ENCODE measurements at regions of chr9 and their contacts with region 1.

Region 1: GRCh38 chr9:96818535-96818934 is 35.8 kb downstream of the ZNF782 start:
- DNase-seq: no peak
- ATAC-seq: no peak
- H3K4me3 ChIP-seq: no peak overlapping the region
- H3K27ac ChIP-seq: no peak overlapping the region
- H3K4me1 ChIP-seq: no peaks in the 10 kb centered on the region
- H3K27me3 ChIP-seq: no peaks in the 10 kb centered on the region
- CTCF ChIP-seq: no peak
- POLR2A ChIP-seq: no peak

Region 2: GRCh38 chr9:96758845-96759673 is 59.5 kb before region 1 on chr9:
- intact Hi-C with region 1: loop called in 2 of 10 experiments (anchors 10 kb)
- DNase-seq: no peak
- ATAC-seq: no peak
- H3K4me3 ChIP-seq: no peak overlapping the region
- H3K27ac ChIP-seq: no peak overlapping the region
- H3K4me1 ChIP-seq: no peaks in the 10 kb centered on the region
- H3K27me3 ChIP-seq: no peaks in the 10 kb centered on the region
- CTCF ChIP-seq: no peak
- POLR2A ChIP-seq: no peak

Region 3: GRCh38 chr9:97179572-97179971 is 361.0 kb after region 1 on chr9:
- intact Hi-C with region 1: no loop called
- DNase-seq: no peak
- ATAC-seq: no peak
- H3K4me3 ChIP-seq: no peak overlapping the region
- H3K27ac ChIP-seq: no peak overlapping the region
- H3K4me1 ChIP-seq: peaks cover 0 to 7% (median 0%) of the 10 kb centered on the region in 12 donors
- H3K27me3 ChIP-seq: peaks cover 0 to 4% (median 0%) of the 10 kb centered on the region in 9 donors
- CTCF ChIP-seq: no peak
- POLR2A ChIP-seq: no peak

Measured in heart left ventricle (tissue), 16 donors.